ENCODE measurements at regions of chr1 and their contacts with region 1.

Region 1: DNA sequence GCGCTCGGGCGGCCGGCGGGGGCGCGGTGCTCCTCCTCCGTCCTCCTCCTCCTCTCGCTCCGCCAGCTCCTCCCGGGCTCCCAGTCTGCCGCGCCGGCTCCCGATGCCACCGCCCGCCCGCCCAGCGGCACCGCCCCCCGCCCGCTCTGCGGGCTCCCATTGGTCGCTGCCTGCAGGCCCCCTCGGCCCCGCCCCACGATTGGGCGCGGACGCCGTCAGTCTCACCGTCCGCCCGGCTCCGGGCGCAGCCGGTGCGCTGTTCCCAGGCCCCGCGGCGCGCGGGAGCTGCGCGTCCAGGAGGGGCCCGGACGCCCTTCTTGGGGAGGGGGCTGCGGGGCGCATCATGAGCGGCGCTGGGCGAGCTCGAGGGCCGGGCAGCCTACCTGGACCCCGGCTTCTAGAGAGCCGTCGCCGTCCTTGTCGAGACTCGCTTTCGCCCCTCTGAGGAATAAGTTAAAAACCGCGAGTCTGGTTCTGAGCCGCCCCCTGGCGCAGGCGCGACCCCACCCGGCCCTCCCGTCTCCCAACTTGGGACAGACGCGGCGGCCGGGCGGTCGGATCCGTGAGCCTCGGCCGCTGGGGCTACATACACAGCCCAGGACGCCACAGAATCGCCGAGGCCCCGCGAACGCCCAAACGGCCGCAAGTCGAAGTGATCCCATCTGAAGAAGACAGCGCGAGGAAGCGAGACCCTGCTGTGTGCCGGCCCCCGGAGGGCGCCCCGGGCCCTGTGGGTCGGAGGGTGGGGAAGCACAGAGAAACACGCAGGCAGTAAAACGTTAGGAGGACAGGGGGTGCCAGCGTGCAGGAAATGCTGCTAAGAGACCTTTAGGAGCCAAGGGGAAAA is at the start of gene SIPA1L2:
- DNase-seq: peak; percentile 93
- H3K4me3 ChIP-seq: peak within 1 kb of the TSS; percentile 83 to 88 (median 84)
- H3K27ac ChIP-seq: peak within 1 kb of the TSS; percentile 21
- H3K4me1 ChIP-seq: peaks cover 16% of the 10 kb centered on the region
- H3K27me3 ChIP-seq: no peaks in the 10 kb centered on the region
- CTCF ChIP-seq: peak; percentile 16 to 38
- POLR2A ChIP-seq: no peak
- total RNA-seq, gene SIPA1L2: 12.8 and 14.2 TPM in 2 replicates

Region 2: GRCh38 chr1:231626535-231626945 is 1003.7 kb before region 1 on chr1 and contains the start of gene DISC1:
- CTCF ChIA-PET with region 1: no interaction called
- POLR2A ChIA-PET with region 1: no interaction called
- dilution Hi-C with region 1: no loop called
- intact Hi-C with region 1: loop called (anchors 5 kb)
- DNase-seq: peak; percentile 97
- H3K4me3 ChIP-seq: peak within 1 kb of the TSS; percentile 55 to 95 (median 71)
- H3K27ac ChIP-seq: peak within 1 kb of the TSS; percentile 40
- H3K4me1 ChIP-seq: peaks cover 14% of the 10 kb centered on the region
- H3K27me3 ChIP-seq: peaks cover 8 to 9% of the 10 kb centered on the region in 2 experiments
- CTCF ChIP-seq: no peak
- POLR2A ChIP-seq: peak; percentile 63
- total RNA-seq, gene DISC1: 12.8 and 14.7 TPM in 2 replicates

Region 3: DNA sequence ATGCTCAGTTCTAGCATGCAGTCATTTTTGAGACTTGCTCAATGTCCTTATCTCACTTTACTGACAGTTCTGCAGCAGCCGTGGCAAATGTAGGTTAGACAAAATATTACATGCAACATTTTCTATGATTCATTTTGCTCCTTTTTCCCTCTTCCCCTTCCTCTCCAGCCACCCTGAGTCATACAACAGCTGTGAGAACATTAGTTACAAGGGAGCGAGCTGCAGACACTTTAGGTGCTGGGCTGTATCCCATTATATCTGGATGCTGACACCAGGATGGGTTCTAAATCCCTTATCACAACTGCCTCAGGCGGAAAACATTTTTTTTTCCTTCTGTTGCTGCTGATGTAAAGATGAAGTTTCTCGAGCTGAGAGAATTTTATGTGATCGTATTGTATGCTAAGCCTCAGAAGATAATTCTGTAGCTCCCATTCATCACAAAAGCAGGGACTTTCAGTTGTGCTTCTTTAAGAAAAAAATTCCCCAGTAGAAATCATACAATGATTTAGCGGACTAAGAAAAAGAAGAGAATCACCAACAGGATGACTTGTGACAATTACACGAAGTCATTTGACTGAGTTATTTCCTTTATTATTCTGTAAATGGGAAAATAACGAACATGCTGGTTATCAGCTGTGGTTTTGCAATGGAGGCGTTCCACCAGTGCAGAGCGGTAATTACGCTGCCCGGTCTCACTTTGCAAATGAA is 658.7 kb before region 1 on chr1:
- CTCF ChIA-PET with region 1: interaction called, 3 read pairs
- POLR2A ChIA-PET with region 1: no interaction called
- dilution Hi-C with region 1: no loop called
- intact Hi-C with region 1: loop called (anchors 2 kb)
- DNase-seq: peak; percentile 94
- H3K4me3 ChIP-seq: peak overlapping the region in 1 of 3 experiments; percentile 46
- H3K27ac ChIP-seq: peak overlapping the region; percentile 59
- H3K4me1 ChIP-seq: peaks cover 17% of the 10 kb centered on the region
- H3K27me3 ChIP-seq: no peaks in the 10 kb centered on the region
- CTCF ChIP-seq: no peak
- POLR2A ChIP-seq: no peak

Region 4: GRCh38 chr1:232306269-232306961 is 323.9 kb before region 1 on chr1:
- CTCF ChIA-PET with region 1: interaction called, 5 read pairs
- POLR2A ChIA-PET with region 1: no interaction called
- dilution Hi-C with region 1: no loop called
- intact Hi-C with region 1: loop called (anchors 5 kb)
- DNase-seq: peak; percentile 77
- H3K4me3 ChIP-seq: no peak overlapping the region
- H3K27ac ChIP-seq: no peak overlapping the region
- H3K4me1 ChIP-seq: no peaks in the 10 kb centered on the region
- H3K27me3 ChIP-seq: no peaks in the 10 kb centered on the region
- CTCF ChIP-seq: peak in 1 of 2 donors; percentile 29
- POLR2A ChIP-seq: no peak

Region 5: DNA sequence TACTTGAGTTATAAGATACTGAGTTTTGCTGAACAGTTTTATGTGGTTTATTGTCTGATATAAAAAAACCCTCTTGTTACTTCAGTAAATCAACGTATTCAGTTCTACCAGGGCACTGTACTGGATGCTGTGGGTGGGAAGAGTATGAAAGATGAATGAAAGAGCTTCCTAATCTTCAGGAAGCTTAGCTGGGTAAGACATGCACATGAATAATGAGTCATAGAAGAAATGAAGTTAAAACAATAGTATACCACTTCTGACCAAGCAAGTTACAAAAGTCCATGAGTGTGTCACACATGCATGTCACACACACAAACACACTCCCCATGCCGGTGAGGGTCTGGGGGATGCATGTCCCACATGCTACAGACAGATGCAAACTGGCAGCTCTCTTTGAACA is 106.2 kb before region 1 on chr1:
- CTCF ChIA-PET with region 1: interaction called, 3 read pairs
- POLR2A ChIA-PET with region 1: no interaction called
- dilution Hi-C with region 1: no loop called
- intact Hi-C with region 1: loop called (anchors 5 kb)
- DNase-seq: peak; percentile 78
- H3K4me3 ChIP-seq: no peak overlapping the region
- H3K27ac ChIP-seq: peak overlapping the region; percentile 27
- H3K4me1 ChIP-seq: peaks cover 13% of the 10 kb centered on the region
- H3K27me3 ChIP-seq: no peaks in the 10 kb centered on the region
- CTCF ChIP-seq: no peak
- POLR2A ChIP-seq: no peak

Region 6: DNA sequence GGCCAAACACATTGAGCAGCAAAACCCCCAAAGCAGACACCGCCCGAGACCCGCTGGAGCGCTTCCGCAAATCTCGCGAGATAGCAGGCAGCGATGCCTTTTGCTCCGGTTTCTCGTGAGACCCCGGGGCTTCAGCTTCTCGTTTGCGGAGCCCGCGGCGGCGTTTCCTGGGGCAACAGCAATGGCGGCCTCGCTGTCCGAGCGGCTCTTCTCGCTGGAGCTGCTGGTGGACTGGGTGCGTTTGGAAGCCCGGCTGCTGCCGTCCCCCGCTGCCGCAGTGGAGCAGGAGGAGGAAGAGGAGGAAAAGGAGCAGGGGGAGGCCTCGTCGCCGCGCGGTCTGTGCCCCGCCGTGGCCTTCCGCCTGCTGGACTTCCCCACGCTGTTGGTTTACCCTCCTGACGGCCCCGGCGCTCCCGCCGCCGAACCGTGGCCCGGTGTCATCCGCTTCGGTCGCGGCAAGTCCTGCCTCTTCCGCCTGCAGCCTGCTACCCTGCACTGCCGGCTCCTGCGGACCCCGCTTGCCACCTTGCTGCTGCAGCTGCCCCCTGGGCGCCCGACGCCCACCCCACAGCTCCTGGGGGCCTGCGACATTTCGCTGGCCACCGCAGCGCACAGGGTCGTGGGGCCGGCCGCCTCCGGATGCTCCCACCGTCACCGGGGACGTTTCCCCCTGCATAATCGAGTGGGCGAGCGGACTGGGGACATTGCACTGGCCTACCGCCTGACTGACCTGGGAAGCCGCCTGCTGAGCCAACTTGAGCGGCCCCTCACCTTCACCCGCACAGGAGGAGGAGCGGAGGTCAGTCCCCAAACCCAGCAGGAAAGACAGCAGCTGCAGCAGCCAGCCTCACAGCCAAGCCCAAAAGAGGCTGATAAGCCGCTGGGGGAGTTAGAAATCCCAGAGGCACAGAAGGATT is 175.3 kb after region 1 on chr1 and contains the start of gene MAP10:
- CTCF ChIA-PET with region 1: no interaction called
- POLR2A ChIA-PET with region 1: no interaction called
- dilution Hi-C with region 1: no loop called
- intact Hi-C with region 1: loop called (anchors 2 kb)
- DNase-seq: peak; percentile 77
- H3K4me3 ChIP-seq: peak within 1 kb of the TSS; percentile 62 to 80 (median 72)
- H3K27ac ChIP-seq: peak within 1 kb of the TSS; percentile 32
- H3K4me1 ChIP-seq: peaks cover 6% of the 10 kb centered on the region
- H3K27me3 ChIP-seq: no peaks in the 10 kb centered on the region
- CTCF ChIP-seq: no peak
- POLR2A ChIP-seq: peak; percentile 51
- total RNA-seq, gene MAP10: 1.9 and 2.0 TPM in 2 replicates

Region 7: DNA sequence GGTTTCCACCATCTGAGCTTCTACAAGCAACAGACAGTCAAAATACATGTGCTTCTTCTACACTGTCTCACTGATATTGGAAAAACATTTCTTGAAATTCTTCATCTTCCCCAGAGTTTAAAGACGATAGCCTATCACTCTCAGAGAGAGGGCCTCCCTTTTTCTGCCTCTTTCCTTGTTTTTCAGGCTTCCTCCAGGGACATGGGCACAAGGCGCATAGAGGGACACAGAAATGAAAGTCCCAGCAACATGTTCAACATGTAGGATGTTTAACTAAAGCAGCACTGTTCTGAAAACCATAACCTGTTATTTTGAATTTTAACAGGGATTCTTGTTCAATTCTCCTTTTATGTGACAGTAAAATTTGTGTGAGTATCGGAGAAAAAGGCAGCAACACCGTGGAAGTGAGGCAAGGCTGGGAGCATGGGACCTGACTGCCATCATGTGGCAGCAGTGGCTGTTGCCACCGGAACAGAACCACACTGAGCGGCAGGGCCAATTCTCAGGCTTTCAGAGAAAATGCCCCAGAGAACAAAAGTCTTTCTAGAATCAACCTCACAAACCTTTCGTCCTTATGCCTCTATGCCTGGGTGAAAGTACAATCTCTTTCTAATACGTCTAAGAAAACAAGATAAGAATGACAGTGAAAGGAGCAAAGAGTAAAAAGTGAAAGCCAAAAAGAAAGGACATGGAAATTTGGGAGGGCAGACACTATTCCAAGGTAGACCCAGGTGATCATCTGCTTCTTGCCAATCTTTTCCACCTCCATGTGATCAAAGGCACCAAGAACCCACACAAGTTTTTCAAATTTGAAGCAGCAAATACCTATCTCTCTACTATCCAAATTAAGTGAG is 610.8 kb after region 1 on chr1:
- CTCF ChIA-PET with region 1: interaction called, 9 read pairs
- POLR2A ChIA-PET with region 1: no interaction called
- dilution Hi-C with region 1: no loop called
- intact Hi-C with region 1: loop called (anchors 1 kb)
- DNase-seq: peak; percentile 65
- H3K4me3 ChIP-seq: no peak overlapping the region
- H3K27ac ChIP-seq: no peak overlapping the region
- H3K4me1 ChIP-seq: no peaks in the 10 kb centered on the region
- H3K27me3 ChIP-seq: no peaks in the 10 kb centered on the region
- CTCF ChIP-seq: peak; percentile 76 to 81
- POLR2A ChIP-seq: no peak

Measured in endothelial cell of umbilical vein (primary cell).